GM10248 (cell line): ENCODE measurements at regions of chr3 and their contacts with region 1.

Region 1: DNA sequence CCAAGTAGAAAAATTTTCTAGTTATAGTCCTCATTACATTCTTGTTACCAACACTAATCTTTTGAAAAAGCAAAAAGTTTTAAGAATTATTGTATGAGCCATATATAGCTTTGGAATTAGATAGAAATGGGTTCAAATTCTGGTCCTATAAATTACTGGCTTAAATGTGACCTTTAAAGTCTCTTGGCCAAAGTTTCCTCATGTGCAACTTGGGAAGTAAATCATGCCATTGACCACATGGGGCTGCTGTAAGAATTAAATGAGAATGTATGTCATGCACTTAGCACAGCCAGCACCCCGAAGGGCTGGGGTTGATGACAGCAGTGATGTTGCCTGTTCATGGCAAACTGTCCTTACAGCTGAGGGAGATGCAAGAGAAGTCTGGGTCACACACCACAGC is 108.3 kb downstream of the TOP2B start:
- DNase-seq: no peak
- CTCF ChIP-seq: no peak

Region 2: GRCh38 chr3:25542492-25543039 is 13.9 kb before region 1 on chr3:
- CTCF ChIA-PET with region 1: interaction called, 12 read pairs
- POLR2A ChIA-PET with region 1: no interaction called
- DNase-seq: no peak
- CTCF ChIP-seq: no peak